Activated T-helper 1 cell treated with anti-CD3 and anti-CD28 coated beads, Interleukin-12 subunit alpha, Interleukin-12 subunit beta, Interleukin-2, Interleukin-4 antibody, amounts not matched to agents 30 ng/mL and 10 ng/mL and 1 ng/mL, durations not matched to agents 14 hours and 24 hours and 36 hours (primary cell): ENCODE measurements at regions of chr3 and their contacts with region 1.

Region 1: GRCh38 chr3:150787741-150788370 is 24.9 kb upstream of the SIAH2 start:
- DNase-seq: peak; percentile 61
- H3K4me3 Mint-ChIP-seq: peak overlapping the region; percentile 43
- H3K27ac Mint-ChIP-seq: no peak overlapping the region
- H3K4me1 Mint-ChIP-seq: peaks cover 52% of the 10 kb centered on the region
- H3K27me3 Mint-ChIP-seq: peaks cover 6% of the 10 kb centered on the region

Region 2: GRCh38 chr3:150703299-150704134 is 84.3 kb before region 1 on chr3 and contains the start of gene ERICH6:
- intact Hi-C with region 1: loop called (anchors 1 kb)
- DNase-seq: peak; percentile 81
- H3K4me3 Mint-ChIP-seq: peak within 1 kb of the TSS; percentile 93
- H3K27ac Mint-ChIP-seq: peak within 1 kb of the TSS; percentile 99
- H3K4me1 Mint-ChIP-seq: peaks cover 23% of the 10 kb centered on the region
- H3K27me3 Mint-ChIP-seq: no peaks in the 10 kb centered on the region
- total RNA-seq, gene ERICH6: not detected in 2 replicates

Region 3: GRCh38 chr3:150737874-150738713 is 49.8 kb before region 1 on chr3:
- intact Hi-C with region 1: loop called (anchors 1 kb)
- DNase-seq: no peak
- H3K4me3 Mint-ChIP-seq: peak overlapping the region; percentile 42
- H3K27ac Mint-ChIP-seq: peak overlapping the region; percentile 92
- H3K4me1 Mint-ChIP-seq: peaks cover 93% of the 10 kb centered on the region
- H3K27me3 Mint-ChIP-seq: no peaks in the 10 kb centered on the region

Region 4: GRCh38 chr3:151086484-151087456 is 298.9 kb after region 1 on chr3:
- intact Hi-C with region 1: loop called (anchors 1 kb)
- DNase-seq: peak; percentile 58
- H3K4me3 Mint-ChIP-seq: peak overlapping the region; percentile 85
- H3K27ac Mint-ChIP-seq: peak overlapping the region; percentile 27
- H3K4me1 Mint-ChIP-seq: peaks cover 4% of the 10 kb centered on the region
- H3K27me3 Mint-ChIP-seq: peaks cover 48% of the 10 kb centered on the region

Region 5: GRCh38 chr3:151265866-151266265 is 478.0 kb after region 1 on chr3:
- intact Hi-C with region 1: loop called (anchors 1 kb)
- DNase-seq: no peak
- H3K4me3 Mint-ChIP-seq: no peak overlapping the region
- H3K27ac Mint-ChIP-seq: no peak overlapping the region
- H3K4me1 Mint-ChIP-seq: peaks cover 66% of the 10 kb centered on the region
- H3K27me3 Mint-ChIP-seq: peaks cover 5% of the 10 kb centered on the region